Activated B cell treated with CpG ODN at 0.5 μM for 24 hours (primary cell): ENCODE measurements at regions of chr16 and their contacts with region 1.

Region 1: GRCh38 chr16:72008424-72009216 is at the start of gene DHODH:
- DNase-seq: peak; percentile 92
- ATAC-seq: peak; percentile 98
- H3K4me3 Mint-ChIP-seq: peak within 1 kb of the TSS; percentile 91
- H3K27ac Mint-ChIP-seq: peak within 1 kb of the TSS; percentile 91
- H3K4me1 Mint-ChIP-seq: peaks cover 18% of the 10 kb centered on the region
- H3K27me3 Mint-ChIP-seq: peaks cover 2% of the 10 kb centered on the region
- CTCF ChIP-seq: no peak
- total RNA-seq, gene DHODH: 12.0 and 13.0 TPM in 2 replicates

Region 2: GRCh38 chr16:71288890-71289733 is 719.5 kb before region 1 on chr16 and contains the start of gene CMTR2:
- CTCF ChIA-PET with region 1: no interaction called
- POLR2A ChIA-PET with region 1: no interaction called
- intact Hi-C with region 1: loop called (anchors 2 kb)
- DNase-seq: peak; percentile 90
- ATAC-seq: peak; percentile 89
- H3K4me3 Mint-ChIP-seq: peak within 1 kb of the TSS; percentile 89
- H3K27ac Mint-ChIP-seq: peak within 1 kb of the TSS; percentile 94
- H3K4me1 Mint-ChIP-seq: peaks cover 29% of the 10 kb centered on the region
- H3K27me3 Mint-ChIP-seq: peaks cover 19% of the 10 kb centered on the region
- CTCF ChIP-seq: no peak
- total RNA-seq, gene CMTR2: 28.6 and 35.3 TPM in 2 replicates

Region 3: DNA sequence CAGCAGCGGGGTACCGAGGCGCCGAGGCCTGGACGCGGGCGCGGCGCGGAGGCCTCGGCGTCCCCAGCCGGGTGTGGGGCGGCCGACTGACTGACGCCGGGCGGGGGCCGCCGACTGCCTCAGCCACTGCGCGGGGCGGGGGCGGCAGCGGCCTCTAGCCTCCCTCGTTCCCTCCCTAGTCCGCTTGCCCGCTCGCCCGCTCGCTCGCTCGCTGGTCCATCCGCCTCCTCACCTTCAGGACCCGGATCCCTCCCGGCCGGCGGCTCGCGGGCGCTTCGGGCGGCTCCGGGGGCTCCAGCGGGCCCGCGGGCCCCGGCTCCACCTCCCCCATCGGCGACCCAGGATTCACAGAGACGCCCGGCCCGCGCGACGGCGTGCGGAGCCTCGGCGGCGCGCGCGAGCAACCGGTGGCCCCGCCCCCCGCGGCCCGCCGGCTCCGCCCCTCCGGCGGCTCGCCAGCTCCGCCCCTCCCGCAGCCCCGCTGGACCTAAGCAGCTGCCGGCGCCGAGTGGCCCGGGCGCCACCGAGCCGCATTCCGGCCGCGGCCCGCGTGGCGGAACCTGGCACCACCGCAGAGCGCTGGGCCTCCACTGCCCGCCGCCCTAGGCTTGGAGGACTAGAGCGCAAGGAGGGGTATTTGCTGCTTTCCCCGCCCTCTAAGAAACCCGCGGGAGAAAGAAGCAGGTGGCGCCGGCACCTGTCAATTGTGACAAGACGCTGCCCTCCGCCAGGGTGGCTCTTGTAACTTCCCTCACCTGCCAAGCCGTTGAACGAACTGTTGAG is 284.9 kb before region 1 on chr16:
- CTCF ChIA-PET with region 1: no interaction called
- POLR2A ChIA-PET with region 1: no interaction called
- intact Hi-C with region 1: loop called (anchors 2 kb)
- DNase-seq: peak; percentile 87
- ATAC-seq: peak; percentile 80
- H3K4me3 Mint-ChIP-seq: peak overlapping the region; percentile 85
- H3K27ac Mint-ChIP-seq: peak overlapping the region; percentile 85
- H3K4me1 Mint-ChIP-seq: peaks cover 50% of the 10 kb centered on the region
- H3K27me3 Mint-ChIP-seq: no peaks in the 10 kb centered on the region
- CTCF ChIP-seq: no peak

Region 4: GRCh38 chr16:71845639-71846430 is 162.8 kb before region 1 on chr16 and contains the start of gene ATXN1L:
- CTCF ChIA-PET with region 1: no interaction called
- POLR2A ChIA-PET with region 1: no interaction called
- intact Hi-C with region 1: loop called (anchors 1 kb)
- DNase-seq: peak; percentile 99
- ATAC-seq: peak; percentile 89
- H3K4me3 Mint-ChIP-seq: peak within 1 kb of the TSS; percentile 92
- H3K27ac Mint-ChIP-seq: peak within 1 kb of the TSS; percentile 98
- H3K4me1 Mint-ChIP-seq: peaks cover 51% of the 10 kb centered on the region
- H3K27me3 Mint-ChIP-seq: no peaks in the 10 kb centered on the region
- CTCF ChIP-seq: no peak
- total RNA-seq, gene ATXN1L: 24.9 and 28.3 TPM in 2 replicates

Region 5: DNA sequence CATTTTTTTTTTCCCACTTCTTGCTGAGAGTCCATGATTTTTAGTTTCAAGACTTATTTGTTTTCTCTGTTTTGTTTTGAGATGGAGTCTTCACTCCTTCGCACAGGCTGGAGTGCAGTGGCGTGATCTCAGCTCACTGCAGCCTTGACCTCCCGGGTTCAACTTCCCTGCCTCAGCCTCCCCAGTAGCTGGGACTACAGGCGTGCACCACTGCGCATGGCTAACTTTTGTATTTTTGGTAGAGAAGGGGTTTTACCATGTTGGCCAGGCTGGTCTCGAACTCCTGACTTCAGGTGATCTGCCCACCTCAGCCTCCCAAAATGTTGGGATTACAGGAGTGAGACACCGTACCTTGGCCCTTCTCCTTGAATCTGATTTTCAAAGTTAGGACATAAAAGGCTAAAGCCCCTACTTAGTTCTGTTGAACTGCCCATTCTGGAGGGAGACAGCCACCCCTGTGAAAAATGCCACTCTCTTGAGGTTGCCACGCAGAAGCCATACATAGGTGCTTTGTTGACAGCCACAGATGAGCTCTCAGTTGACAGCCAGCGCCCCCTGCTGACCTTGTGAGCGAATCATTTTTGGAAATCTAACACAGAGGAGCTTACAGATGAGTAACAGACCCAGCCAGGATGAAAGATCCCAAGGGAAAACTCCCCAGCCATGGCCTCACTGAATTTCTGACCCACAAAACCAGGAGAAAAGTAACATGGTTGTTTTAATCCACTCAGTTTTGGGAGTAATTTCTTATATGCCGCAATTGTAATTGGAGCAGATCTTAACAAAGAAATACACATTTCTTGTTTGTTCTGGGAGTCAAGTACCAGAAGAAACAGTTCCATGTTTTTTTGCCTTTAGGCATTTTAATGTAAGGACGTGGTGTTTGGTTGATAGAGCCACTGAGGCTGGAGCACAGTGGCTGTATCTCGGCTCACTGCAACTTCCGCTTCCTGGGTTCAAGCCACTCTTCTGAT is 47.3 kb before region 1 on chr16:
- CTCF ChIA-PET with region 1: no interaction called
- POLR2A ChIA-PET with region 1: no interaction called
- intact Hi-C with region 1: loop called (anchors 1 kb)
- DNase-seq: peak; percentile 63
- ATAC-seq: peak; percentile 89
- H3K4me3 Mint-ChIP-seq: no peak overlapping the region
- H3K27ac Mint-ChIP-seq: no peak overlapping the region
- H3K4me1 Mint-ChIP-seq: peaks cover 27% of the 10 kb centered on the region
- H3K27me3 Mint-ChIP-seq: peaks cover 3% of the 10 kb centered on the region
- CTCF ChIP-seq: no peak

Region 6: GRCh38 chr16:72172105-72173034 is 163.8 kb after region 1 on chr16 and contains the start of gene PMFBP1:
- CTCF ChIA-PET with region 1: no interaction called
- POLR2A ChIA-PET with region 1: no interaction called
- intact Hi-C with region 1: loop called (anchors 1 kb)
- DNase-seq: peak; percentile 17
- ATAC-seq: peak; percentile 95
- H3K4me3 Mint-ChIP-seq: peak within 1 kb of the TSS; percentile 6
- H3K27ac Mint-ChIP-seq: peak within 1 kb of the TSS; percentile 85
- H3K4me1 Mint-ChIP-seq: peaks cover 12% of the 10 kb centered on the region
- H3K27me3 Mint-ChIP-seq: no peaks in the 10 kb centered on the region
- CTCF ChIP-seq: no peak
- total RNA-seq, gene PMFBP1: 5.7 and 5.9 TPM in 2 replicates